BJ (cell line): ENCODE measurements at regions of chr16 and their contacts with region 1.

Region 1: GRCh38 chr16:50024684-50025536 is at the start of gene CNEP1R1:
- DNase-seq: peak; percentile 72
- H3K4me3 ChIP-seq: peak within 1 kb of the TSS; percentile 70
- H3K27me3 ChIP-seq: peaks cover 2% of the 10 kb centered on the region
- CTCF ChIP-seq: peak; percentile 100
- polyA plus RNA-seq, gene CNEP1R1: 15.2 and 24.5 TPM in 2 replicates

Region 2: DNA sequence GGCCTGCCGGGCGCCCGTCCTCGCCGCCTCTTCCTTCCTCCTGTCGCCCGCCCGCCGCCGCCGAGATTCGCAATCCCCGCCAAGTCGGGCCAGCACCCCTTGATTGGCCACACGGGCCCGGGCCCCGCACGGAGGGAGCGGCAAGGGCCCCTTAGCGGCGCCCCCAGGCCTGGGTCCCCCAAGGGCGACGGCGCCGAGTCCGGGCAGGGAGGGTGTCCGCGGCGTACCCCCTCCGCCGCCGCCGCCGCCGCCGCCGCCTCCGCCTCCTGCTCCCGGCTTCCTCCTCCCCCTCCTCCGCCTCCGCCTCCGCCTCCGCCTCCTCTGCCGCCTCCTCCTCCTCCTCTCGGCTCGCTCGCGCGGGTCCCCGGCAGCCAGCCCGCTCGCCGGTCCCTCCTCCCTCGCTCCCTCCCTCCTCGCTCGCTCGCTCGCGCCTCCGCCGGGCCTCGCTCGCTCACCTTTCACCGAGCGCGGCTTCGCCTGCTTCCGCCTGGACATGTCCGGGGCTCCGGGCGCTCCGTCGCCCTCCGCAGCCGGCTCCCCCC is 169.6 kb before region 1 on chr16:
- CTCF ChIA-PET with region 1: no interaction called
- POLR2A ChIA-PET with region 1: no interaction called
- DNase-seq: no peak
- H3K4me3 ChIP-seq: peak overlapping the region; percentile 54
- H3K27me3 ChIP-seq: peaks cover 16% of the 10 kb centered on the region
- CTCF ChIP-seq: no peak

Region 3: GRCh38 chr16:49964316-49964715 is 60.6 kb before region 1 on chr16:
- CTCF ChIA-PET with region 1: no interaction called
- POLR2A ChIA-PET with region 1: no interaction called
- DNase-seq: no peak
- H3K4me3 ChIP-seq: no peak overlapping the region
- H3K27me3 ChIP-seq: peaks cover 1% of the 10 kb centered on the region; the same call in 1 of the 2 replicates
- CTCF ChIP-seq: no peak

Region 4: DNA sequence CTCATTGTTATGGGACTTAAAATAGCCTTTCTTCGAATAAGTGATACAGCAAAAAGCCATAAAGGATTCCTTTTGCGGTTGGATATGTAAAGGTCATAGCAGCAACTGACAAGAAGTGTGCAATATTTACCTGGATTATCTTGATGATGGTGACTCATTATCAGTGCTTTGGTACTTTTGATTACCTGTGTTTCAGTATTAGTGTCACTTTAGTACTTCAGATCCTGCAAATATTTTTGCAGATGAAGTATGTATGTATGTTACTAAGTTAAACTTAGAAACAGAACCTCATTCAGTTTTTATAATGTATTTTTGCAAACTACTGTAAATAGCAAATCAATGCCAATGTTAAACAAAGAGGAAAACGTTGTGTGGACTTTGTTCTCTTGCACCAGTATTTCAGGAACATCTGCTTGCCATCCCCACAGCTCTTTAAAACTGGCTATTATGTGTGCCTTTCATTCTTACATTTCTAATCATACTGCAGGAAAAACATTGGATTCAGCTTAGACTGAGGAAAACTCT is 10.6 kb after region 1 on chr16:
- CTCF ChIA-PET with region 1: interaction called, 10 read pairs
- POLR2A ChIA-PET with region 1: no interaction called
- DNase-seq: no peak
- H3K4me3 ChIP-seq: no peak overlapping the region
- H3K27me3 ChIP-seq: no peaks in the 10 kb centered on the region
- CTCF ChIP-seq: no peak

Region 5: DNA sequence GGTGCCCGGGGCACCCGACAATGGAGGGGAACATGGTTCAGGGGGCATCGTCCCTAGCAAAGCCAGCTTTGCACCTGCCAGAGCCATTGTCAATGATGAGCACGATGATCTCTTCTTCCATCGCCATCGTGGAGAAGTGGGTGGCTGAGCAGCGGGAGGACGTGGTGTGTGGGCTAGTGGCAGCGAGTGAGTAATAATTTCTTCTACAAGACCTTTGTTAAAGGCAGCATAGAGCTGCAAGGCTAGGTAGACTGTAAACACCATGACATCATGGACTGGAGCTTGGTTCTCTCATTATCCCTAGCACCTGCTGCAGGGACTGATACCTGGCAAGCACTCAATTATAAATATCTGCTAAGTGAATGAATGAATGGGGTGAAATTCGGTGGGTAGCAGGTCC is 34.2 kb after region 1 on chr16:
- CTCF ChIA-PET with region 1: interaction called, 12 read pairs
- POLR2A ChIA-PET with region 1: interaction called, 5 read pairs
- DNase-seq: no peak
- H3K4me3 ChIP-seq: no peak overlapping the region
- H3K27me3 ChIP-seq: no peaks in the 10 kb centered on the region
- CTCF ChIP-seq: no peak

Region 6: GRCh38 chr16:50065624-50066481 is 40.9 kb after region 1 on chr16 and contains the start of gene HEATR3:
- CTCF ChIA-PET with region 1: interaction called, 14 read pairs
- POLR2A ChIA-PET with region 1: no interaction called
- DNase-seq: peak; percentile 56
- H3K4me3 ChIP-seq: peak within 1 kb of the TSS; percentile 98
- H3K27me3 ChIP-seq: no peaks in the 10 kb centered on the region
- CTCF ChIP-seq: no peak
- polyA plus RNA-seq, gene HEATR3: 13.0 and 18.5 TPM in 2 replicates